ENCODE measurements at regions of chr17 and their contacts with region 1.

Region 1: DNA sequence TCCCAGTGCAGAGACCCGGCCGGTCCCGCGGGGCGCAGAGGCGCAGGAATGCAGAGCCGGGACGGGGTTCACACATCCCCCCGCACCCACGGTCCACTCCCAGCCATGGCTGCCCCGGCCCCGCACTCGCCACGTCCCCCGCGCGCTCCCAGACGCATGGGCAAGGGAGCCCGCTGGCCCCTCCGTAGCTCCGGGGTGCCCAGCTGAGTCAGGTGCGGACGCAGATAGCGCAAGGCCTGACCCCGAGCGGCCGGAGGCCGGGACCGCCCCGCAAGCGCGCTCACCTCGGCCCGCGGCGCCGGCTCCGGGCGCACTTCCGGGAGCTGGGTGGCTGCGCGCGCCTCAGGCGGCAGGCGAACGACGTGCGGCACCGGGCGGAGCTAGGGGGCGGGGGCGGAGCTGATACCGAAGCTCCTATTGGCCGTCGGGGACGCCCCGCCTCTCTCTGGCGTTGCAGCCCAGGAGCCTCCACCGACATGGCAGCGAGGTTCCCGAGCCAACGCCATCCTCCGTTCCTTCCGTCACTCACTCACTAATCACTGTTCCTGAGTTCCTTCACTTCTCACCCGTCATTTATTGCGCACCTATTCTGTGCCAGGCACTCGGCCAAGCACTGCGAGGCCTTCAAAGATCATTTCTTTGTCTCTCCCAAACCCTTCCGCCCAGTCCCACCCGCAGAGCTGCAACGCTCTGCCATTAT is at the start of gene ZNF18:
- H3K4me3 ChIP-seq: peak within 1 kb of the TSS; percentile 94
- H3K27ac ChIP-seq: peak within 1 kb of the TSS; percentile 81
- H3K4me1 ChIP-seq: no peaks in the 10 kb centered on the region; the same call in 1 of the 2 replicates
- CTCF ChIP-seq: peak; percentile 51

Region 2: GRCh38 chr17:11986942-11987329 is 10.4 kb before region 1 on chr17:
- CTCF ChIA-PET with region 1: interaction called, 15 read pairs
- POLR2A ChIA-PET with region 1: interaction called, 12 read pairs
- H3K4me3 ChIP-seq: no peak overlapping the region
- H3K27ac ChIP-seq: no peak overlapping the region
- H3K4me1 ChIP-seq: no peaks in the 10 kb centered on the region
- CTCF ChIP-seq: no peak

Region 3: GRCh38 chr17:12007466-12007865 is 10.2 kb after region 1 on chr17:
- CTCF ChIA-PET with region 1: interaction called, 3 read pairs
- POLR2A ChIA-PET with region 1: interaction called, 19 read pairs
- H3K4me3 ChIP-seq: no peak overlapping the region
- H3K27ac ChIP-seq: no peak overlapping the region
- H3K4me1 ChIP-seq: no peaks in the 10 kb centered on the region
- CTCF ChIP-seq: no peak

Region 4: GRCh38 chr17:12020642-12021622 is 23.6 kb after region 1 on chr17 and contains the start of gene MAP2K4:
- CTCF ChIA-PET with region 1: interaction called, 3 read pairs
- POLR2A ChIA-PET with region 1: interaction called, 70 read pairs
- H3K4me3 ChIP-seq: peak within 1 kb of the TSS; percentile 80
- H3K27ac ChIP-seq: peak within 1 kb of the TSS; percentile 87
- H3K4me1 ChIP-seq: peaks cover 31% of the 10 kb centered on the region
- CTCF ChIP-seq: no peak

Region 5: GRCh38 chr17:12047681-12048376 is 50.5 kb after region 1 on chr17:
- CTCF ChIA-PET with region 1: interaction called, 4 read pairs
- POLR2A ChIA-PET with region 1: interaction called, 13 read pairs
- H3K4me3 ChIP-seq: no peak overlapping the region
- H3K27ac ChIP-seq: no peak overlapping the region
- H3K4me1 ChIP-seq: peaks cover 29% of the 10 kb centered on the region
- CTCF ChIP-seq: no peak

Region 6: GRCh38 chr17:13017659-13018459 is 1020.6 kb after region 1 on chr17 and contains the start of gene ELAC2:
- CTCF ChIA-PET with region 1: no interaction called
- POLR2A ChIA-PET with region 1: interaction called, 19 read pairs
- H3K4me3 ChIP-seq: peak within 1 kb of the TSS; percentile 81
- H3K27ac ChIP-seq: peak within 1 kb of the TSS; percentile 78
- H3K4me1 ChIP-seq: peaks cover 6% of the 10 kb centered on the region; the same call in 1 of the 2 replicates
- CTCF ChIP-seq: peak; percentile 82

Measured in HEK293 (cell line).